ENCODE measurements at regions of chr19 and their contacts with region 1.

Region 1: DNA sequence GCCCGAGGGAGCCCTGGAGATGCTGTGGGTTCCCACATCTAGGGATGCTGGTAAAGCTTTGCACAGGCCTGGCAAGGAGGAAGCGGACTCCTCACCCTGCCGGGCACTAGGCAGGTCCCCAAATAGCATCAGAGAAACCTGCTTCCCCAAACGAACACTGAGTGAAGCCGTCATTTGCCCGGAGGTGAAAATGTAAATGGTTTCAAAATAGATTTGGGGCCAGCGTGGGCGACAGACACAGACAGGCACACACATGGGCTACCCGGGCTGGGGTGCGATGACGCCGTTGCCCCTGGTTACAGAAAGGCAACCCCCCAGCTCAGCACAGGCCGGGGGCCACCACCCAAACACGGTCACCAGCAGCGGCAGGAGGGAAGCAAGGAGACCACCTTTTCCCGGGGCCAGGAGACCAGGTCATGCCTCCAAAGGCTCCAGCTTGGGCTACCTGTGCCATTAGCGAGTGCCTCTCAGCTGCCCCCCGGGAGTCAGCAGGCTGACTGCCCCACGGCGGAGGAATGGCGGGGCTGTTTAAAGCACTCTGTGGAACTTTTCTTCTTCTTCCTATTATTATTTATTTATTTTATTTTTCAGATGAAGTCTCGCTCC is 47.5 kb upstream of the NDUFS7 start:
- DNase-seq: no peak

Region 2: DNA sequence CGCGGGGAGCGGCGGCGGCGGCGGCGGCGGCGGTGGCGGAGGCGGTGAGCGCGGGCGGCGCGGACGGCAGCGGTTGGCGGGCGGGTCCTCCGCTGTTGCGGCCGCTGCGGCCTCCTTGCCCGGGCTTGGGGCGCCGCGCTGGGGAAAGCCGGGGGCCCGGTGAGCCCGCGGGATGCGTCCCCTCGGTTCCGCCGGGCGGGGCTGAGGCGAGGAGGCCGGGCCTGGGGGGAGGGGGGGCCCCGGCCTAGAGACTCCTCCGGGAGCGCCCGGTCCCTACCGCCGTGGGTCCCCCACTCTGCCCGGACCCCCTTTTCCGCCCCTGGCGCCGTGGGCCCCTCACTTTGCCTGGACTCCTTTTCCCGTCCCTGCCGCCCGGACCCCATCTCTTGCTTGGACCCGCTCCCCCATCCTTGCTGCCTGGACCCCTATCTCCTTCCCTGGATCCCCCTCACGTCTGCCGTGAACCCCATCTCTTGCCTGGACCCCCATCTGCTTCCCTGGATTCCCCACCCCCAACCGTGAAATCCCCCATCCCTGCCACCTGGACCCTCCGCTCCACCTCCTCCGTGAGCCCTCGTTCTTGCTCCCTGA is 18.9 kb after region 1 on chr19:
- CTCF ChIA-PET with region 1: no interaction called
- POLR2A ChIA-PET with region 1: interaction called, 12 read pairs
- DNase-seq: no peak

Region 3: DNA sequence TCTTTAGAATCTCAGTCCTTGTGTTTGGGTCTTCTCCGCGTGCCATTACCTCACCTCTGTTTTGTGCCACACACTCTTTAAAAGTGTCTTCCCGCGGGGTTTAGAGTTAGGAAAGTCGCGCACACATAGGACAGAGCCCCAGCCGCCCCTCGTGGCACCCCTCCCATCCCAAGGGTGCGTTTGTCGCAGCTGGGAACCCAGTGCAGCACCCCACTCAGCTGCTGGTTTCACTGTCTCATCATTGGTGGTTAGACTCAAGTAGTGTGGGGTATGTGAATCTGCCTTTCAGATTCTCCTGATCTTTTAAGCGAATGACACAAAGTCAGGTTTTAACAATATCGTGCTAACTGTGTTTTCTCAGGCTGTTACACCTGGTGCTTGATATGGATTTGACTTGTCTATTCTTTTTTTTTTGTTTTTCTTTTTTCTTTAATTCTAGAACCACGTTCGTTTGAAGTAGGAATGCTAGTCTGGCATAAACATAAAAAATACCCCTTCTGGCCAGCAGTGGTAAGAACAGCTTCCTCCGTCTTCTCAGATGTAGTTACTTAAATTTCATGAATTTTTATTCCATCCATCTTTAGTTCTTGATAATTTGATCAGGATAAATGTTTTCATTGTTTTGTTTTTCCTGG is 28.0 kb after region 1 on chr19:
- CTCF ChIA-PET with region 1: interaction called, 10 read pairs
- POLR2A ChIA-PET with region 1: no interaction called
- DNase-seq: no peak